Dorsolateral prefrontal cortex (tissue), 120 donors: ENCODE measurements at regions of chr14 and their contacts with region 1.

Region 1: DNA sequence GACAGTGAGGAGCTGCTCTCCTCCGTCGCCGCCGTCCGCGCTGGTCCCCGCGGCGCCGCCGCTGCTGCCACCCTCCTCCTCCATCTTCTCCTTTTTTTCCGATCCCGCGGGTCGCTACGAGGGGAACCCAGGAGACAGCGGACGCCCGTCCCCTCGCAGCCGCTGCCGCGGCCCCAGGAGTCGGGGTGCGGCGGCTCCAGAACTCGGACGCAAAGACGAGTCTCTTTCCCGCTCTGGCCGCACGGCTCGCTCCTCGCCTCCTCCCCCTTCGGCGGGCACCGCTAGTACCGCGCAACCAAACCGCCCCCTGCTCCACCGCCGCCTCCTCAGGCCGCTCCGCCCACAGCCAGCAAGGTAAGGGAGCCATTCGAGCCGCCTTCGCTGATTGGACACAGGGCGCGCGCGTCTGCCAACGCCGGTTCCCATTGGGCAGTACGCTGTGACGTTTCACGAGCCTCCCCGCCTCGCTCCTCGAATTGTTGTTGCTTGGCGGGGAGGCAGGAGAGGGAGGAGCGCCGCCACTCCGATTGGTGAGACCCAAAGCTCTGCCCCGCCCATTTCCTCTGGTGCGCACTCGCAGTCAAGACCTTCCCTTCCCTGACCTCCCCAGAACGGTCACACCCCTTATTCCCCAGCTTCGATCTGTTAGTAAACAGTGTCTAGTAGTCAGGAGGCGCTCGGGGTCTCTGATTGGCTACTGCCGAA is at the start of gene RPS6KA5:
- DNase-seq: peak; percentile 99 to 100 (median 100)
- H3K4me3 ChIP-seq: peak within 1 kb of the TSS; percentile 71 to 98 (median 93)
- H3K27ac ChIP-seq: peak within 1 kb of the TSS; percentile 88 to 100 (median 98)
- H3K27me3 ChIP-seq: no peaks in the 10 kb centered on the region
- CTCF ChIP-seq: peak in 44 of 56 donors; percentile 6 to 62 (median 38)
- total RNA-seq, gene RPS6KA5: 24.8 to 54.3 (median 39.0) TPM

Region 2: DNA sequence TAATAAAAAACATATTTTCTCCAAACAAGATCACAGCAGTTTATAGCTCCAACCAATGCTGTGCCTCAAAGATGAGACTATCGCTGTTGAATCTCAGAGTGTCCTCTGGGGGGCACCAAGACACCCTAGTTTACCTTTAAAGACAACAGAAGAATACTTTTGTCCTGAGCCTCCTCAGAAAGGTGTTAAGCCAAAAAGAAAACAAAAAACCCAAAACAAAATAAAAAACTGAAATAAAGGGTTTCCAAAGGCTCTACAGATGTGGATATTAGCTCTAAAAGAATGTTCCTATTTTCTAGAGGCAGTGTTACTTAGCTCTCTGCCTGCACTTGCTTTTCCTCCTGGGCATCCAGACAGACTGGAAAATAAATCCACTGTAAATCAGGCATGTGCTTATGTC is 157.4 kb before region 1 on chr14:
- intact Hi-C with region 1: loop called (anchors 2 to 5 kb)
- DNase-seq: peak in 8 of 10 donors; percentile 46 to 86 (median 60)
- H3K4me3 ChIP-seq: no peak overlapping the region
- H3K27ac ChIP-seq: peak overlapping the region in 20 of 59 donors; percentile 2 to 64 (median 23)
- H3K27me3 ChIP-seq: no peaks in the 10 kb centered on the region
- CTCF ChIP-seq: peak; percentile 47 to 94 (median 83)

Region 3: DNA sequence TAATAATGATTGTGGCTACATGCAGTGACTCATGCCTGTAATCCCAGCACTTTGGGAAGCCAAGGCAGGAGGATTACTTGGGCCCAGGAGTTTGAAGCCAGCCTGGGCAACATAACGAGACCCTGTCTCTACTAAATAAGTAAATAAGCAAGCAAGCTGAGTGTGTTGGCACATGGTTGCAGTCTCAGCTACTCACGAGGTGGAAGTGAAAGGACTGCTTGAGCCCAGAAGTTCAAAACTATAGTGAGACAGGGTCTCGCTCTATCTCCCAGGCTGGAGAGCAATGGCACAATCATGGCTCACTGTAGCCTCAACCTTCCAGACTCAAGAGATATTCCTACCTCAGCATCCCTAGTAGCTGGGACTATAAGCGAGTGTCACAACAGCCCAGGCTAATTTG is 64.7 kb before region 1 on chr14:
- intact Hi-C with region 1: no loop called
- DNase-seq: no peak
- H3K4me3 ChIP-seq: no peak overlapping the region
- H3K27ac ChIP-seq: no peak overlapping the region
- H3K27me3 ChIP-seq: no peaks in the 10 kb centered on the region
- CTCF ChIP-seq: no peak

Region 4: GRCh38 chr14:91035855-91036254 is 24.6 kb before region 1 on chr14:
- intact Hi-C with region 1: no loop called
- DNase-seq: no peak
- H3K4me3 ChIP-seq: no peak overlapping the region
- H3K27ac ChIP-seq: no peak overlapping the region
- H3K27me3 ChIP-seq: no peaks in the 10 kb centered on the region
- CTCF ChIP-seq: no peak

Region 5: DNA sequence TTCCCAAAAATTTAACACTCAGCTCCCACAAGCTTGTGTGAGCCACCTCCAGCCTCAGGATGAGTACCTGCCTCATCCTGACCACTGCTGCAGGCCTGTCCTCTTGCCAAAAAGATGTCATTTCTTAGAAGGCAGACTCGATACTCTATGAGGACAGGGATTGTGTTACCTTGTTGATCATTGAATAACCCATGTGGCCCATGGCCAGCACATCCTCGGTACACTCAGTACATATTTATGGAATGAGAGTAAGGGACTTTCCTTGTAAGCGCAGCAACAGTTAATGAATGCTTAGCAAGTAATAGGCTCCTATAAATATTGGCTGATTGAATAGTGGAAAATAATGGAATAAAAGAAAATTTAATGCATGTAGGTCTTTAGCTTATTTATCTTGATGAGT is 38.1 kb after region 1 on chr14:
- intact Hi-C with region 1: loop called in 1 of 2 experiments (anchors 5 kb)
- DNase-seq: no peak
- H3K4me3 ChIP-seq: no peak overlapping the region
- H3K27ac ChIP-seq: no peak overlapping the region
- H3K27me3 ChIP-seq: no peaks in the 10 kb centered on the region
- CTCF ChIP-seq: no peak

Region 6: DNA sequence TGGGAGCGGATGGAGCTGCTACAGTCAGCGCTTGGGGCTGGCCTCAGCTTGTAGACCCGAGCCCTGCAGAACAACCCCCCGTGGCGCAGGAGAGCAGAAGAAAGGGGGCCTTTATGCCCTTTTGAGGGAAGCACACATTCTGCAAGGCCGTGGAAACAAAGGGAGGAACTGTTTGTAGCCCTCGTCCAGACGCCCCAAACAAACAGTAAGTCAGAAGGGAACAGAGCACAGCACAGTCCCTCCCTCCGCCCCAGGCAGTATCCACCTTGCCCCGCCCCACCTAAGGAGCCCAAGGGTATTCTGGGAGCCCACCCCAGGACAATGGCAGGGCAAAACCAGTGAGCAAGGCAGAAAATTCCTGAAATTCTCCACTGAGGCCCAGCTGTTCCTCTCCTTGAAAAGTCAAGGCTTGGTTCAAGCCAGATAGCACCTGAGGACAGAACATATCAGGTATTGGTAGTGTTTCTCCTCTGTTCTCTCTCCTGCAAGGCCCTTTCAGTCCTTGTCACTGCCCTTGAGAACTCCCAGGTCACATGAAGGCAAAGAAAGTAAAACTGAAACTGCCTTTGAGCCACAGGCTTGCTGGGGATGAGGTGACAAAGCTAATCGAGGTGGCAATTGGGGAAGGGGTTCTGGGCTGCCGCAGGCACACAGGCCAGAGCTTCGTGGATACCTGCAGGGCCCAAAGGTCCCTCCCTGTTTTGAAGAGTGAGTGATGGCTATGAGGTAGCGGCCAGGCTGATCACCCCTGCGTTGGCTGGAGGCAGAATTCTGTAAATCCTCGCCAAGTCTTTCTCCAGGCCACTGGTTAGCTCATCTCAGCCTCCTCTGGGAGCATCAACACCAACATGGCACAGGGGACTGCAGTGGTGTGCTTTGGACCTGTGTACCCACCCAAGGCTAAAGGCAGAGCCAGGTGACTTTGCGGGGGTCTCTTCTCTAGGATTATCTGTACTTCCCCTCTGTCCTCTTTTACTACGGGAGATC is 53.9 kb after region 1 on chr14:
- intact Hi-C with region 1: loop called (anchors 1 to 2 kb)
- DNase-seq: peak in 9 of 10 donors; percentile 84 to 97 (median 95)
- H3K4me3 ChIP-seq: peak overlapping the region; percentile 51 to 89 (median 72)
- H3K27ac ChIP-seq: peak overlapping the region; percentile 84 to 99 (median 98)
- H3K27me3 ChIP-seq: no peaks in the 10 kb centered on the region
- CTCF ChIP-seq: peak in 6 of 56 donors; percentile 3 to 33 (median 11)

Region 7: DNA sequence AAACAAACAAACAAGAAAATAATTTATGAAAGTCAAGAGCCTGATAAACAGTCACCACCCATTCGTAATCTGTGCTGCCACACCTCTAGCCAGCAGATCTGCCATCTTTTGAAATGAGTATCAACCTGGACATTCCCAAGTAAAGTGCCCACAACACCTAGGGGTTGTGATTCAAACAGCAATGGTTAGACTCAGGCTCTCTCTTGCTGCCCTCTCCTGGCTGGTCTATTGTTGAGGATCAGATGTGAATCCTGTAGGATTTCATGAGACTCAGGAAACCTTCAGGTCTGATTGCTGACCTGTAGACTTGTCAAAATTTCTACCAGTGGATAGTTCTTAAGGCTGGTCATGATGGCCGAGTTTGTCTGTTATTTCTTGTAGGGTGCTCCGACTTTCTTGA is 80.2 kb after region 1 on chr14:
- intact Hi-C with region 1: loop called in 1 of 2 experiments (anchors 2 kb)
- DNase-seq: peak in 3 of 10 donors; percentile 42 to 70 (median 67)
- H3K4me3 ChIP-seq: no peak overlapping the region
- H3K27ac ChIP-seq: peak overlapping the region in 1 of 59 donors; percentile 29
- H3K27me3 ChIP-seq: no peaks in the 10 kb centered on the region
- CTCF ChIP-seq: peak; percentile 28 to 79 (median 60)

Region 8: GRCh38 chr14:91177073-91178034 is 116.9 kb after region 1 on chr14:
- intact Hi-C with region 1: loop called (anchors 2 to 5 kb)
- DNase-seq: peak in 1 of 10 donors; percentile 39
- H3K4me3 ChIP-seq: no peak overlapping the region
- H3K27ac ChIP-seq: peak overlapping the region in 2 of 59 donors; percentile 25 to 61
- H3K27me3 ChIP-seq: no peaks in the 10 kb centered on the region
- CTCF ChIP-seq: peak in 55 of 56 donors; percentile 36 to 80 (median 68)